MCF 10A (cell line): ENCODE measurements at regions of chr10 and their contacts with region 1.

Region 1: GRCh38 chr10:102009801-102010425 is 46.1 kb downstream of the ARMH3 start:
- DNase-seq: peak; percentile 87
- H3K4me3 Mint-ChIP-seq: no peak overlapping the region
- H3K27ac Mint-ChIP-seq: no peak overlapping the region
- H3K4me1 Mint-ChIP-seq: peaks cover 6% of the 10 kb centered on the region
- H3K27me3 Mint-ChIP-seq: no peaks in the 10 kb centered on the region
- CTCF ChIP-seq: peak; percentile 91

Region 2: DNA sequence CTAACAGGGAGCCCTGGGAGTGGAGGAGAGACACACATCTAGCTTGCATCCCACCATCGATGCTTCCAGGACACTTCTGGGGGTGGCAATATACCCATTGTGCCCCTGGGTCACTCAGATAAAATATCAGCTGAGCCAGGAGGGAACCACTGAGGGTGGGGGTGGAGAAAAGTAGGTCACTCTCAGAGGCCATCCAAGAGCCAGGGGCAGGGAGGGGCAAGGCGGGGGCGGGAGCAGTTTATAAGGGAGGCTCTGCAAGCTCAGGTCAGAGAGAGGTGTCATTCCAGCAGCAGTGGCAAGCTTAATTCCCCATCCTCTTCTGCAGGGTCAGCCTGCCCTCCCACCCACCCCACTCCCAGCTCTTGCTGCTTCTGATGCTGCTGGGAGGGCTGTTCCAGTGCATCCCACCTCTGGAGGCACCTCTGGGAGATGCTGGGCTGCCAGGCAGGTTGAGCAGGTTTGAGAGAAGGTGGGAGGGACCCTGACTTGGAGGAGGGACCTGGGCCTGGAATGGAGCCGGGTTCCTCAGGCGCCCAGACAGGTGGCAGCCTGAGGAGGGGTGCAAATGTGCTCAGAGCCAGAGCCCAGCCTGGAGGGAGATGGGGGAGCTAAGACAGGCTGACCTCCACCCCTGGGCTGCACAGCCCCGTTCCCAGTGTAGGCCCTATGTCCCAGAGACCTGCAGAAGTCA is 898.9 kb before region 1 on chr10:
- CTCF ChIA-PET with region 1: no interaction called
- POLR2A ChIA-PET with region 1: no interaction called
- intact Hi-C with region 1: no loop called
- DNase-seq: no peak
- H3K4me3 Mint-ChIP-seq: no peak overlapping the region
- H3K27ac Mint-ChIP-seq: no peak overlapping the region
- H3K4me1 Mint-ChIP-seq: no peaks in the 10 kb centered on the region
- H3K27me3 Mint-ChIP-seq: peaks cover 24% of the 10 kb centered on the region
- CTCF ChIP-seq: no peak

Region 3: GRCh38 chr10:101830322-101831168 is 179.4 kb before region 1 on chr10:
- CTCF ChIA-PET with region 1: interaction called, 53 read pairs
- POLR2A ChIA-PET with region 1: interaction called, 3 read pairs
- intact Hi-C with region 1: no loop called
- DNase-seq: peak; percentile 87
- H3K4me3 Mint-ChIP-seq: peak overlapping the region; percentile 80
- H3K27ac Mint-ChIP-seq: peak overlapping the region; percentile 75
- H3K4me1 Mint-ChIP-seq: peaks cover 25% of the 10 kb centered on the region
- H3K27me3 Mint-ChIP-seq: no peaks in the 10 kb centered on the region
- CTCF ChIP-seq: no peak

Region 4: GRCh38 chr10:101858723-101859500 is 151.0 kb before region 1 on chr10:
- CTCF ChIA-PET with region 1: interaction called, 13 read pairs
- POLR2A ChIA-PET with region 1: no interaction called
- intact Hi-C with region 1: no loop called
- DNase-seq: no peak
- H3K4me3 Mint-ChIP-seq: no peak overlapping the region
- H3K27ac Mint-ChIP-seq: no peak overlapping the region
- H3K4me1 Mint-ChIP-seq: no peaks in the 10 kb centered on the region
- H3K27me3 Mint-ChIP-seq: no peaks in the 10 kb centered on the region
- CTCF ChIP-seq: no peak

Region 5: GRCh38 chr10:101897633-101898032 is 112.3 kb before region 1 on chr10:
- CTCF ChIA-PET with region 1: interaction called, 11 read pairs
- POLR2A ChIA-PET with region 1: no interaction called
- intact Hi-C with region 1: no loop called
- DNase-seq: peak; percentile 35
- H3K4me3 Mint-ChIP-seq: no peak overlapping the region
- H3K27ac Mint-ChIP-seq: no peak overlapping the region
- H3K4me1 Mint-ChIP-seq: peaks cover 4% of the 10 kb centered on the region
- H3K27me3 Mint-ChIP-seq: no peaks in the 10 kb centered on the region
- CTCF ChIP-seq: no peak

Region 6: DNA sequence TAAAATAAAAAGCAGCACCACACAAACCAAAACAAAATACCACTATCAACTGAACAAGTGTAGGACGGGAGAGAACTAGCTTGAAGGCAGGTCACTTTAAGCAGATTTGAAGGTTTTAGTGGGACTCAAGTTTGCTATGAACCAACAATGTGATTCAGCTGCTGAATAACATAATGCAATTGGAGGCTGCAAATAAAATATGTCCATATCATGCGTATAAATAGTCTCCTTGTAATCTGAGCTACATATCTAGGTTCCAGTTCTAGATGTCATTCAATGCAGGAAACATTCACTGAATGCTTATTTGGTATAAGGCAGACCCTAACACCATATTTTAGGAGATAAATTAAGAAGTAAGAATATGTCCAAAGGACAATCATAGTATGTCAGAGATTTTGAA is 84.9 kb before region 1 on chr10:
- CTCF ChIA-PET with region 1: no interaction called
- POLR2A ChIA-PET with region 1: no interaction called
- intact Hi-C with region 1: no loop called
- DNase-seq: no peak
- H3K4me3 Mint-ChIP-seq: no peak overlapping the region
- H3K27ac Mint-ChIP-seq: no peak overlapping the region
- H3K4me1 Mint-ChIP-seq: no peaks in the 10 kb centered on the region
- H3K27me3 Mint-ChIP-seq: no peaks in the 10 kb centered on the region
- CTCF ChIP-seq: no peak

Region 7: GRCh38 chr10:102020938-102021337 is 11.0 kb after region 1 on chr10:
- CTCF ChIA-PET with region 1: interaction called, 30 read pairs
- POLR2A ChIA-PET with region 1: interaction called, 3 read pairs
- intact Hi-C with region 1: no loop called
- DNase-seq: no peak
- H3K4me3 Mint-ChIP-seq: no peak overlapping the region
- H3K27ac Mint-ChIP-seq: no peak overlapping the region
- H3K4me1 Mint-ChIP-seq: no peaks in the 10 kb centered on the region
- H3K27me3 Mint-ChIP-seq: no peaks in the 10 kb centered on the region
- CTCF ChIP-seq: no peak

Region 8: GRCh38 chr10:102072673-102073527 is 63.0 kb after region 1 on chr10:
- CTCF ChIA-PET with region 1: interaction called, 16 read pairs
- POLR2A ChIA-PET with region 1: interaction called, 3 read pairs
- intact Hi-C with region 1: loop called (anchors 2 kb)
- DNase-seq: peak; percentile 86
- H3K4me3 Mint-ChIP-seq: no peak overlapping the region
- H3K27ac Mint-ChIP-seq: peak overlapping the region; percentile 76
- H3K4me1 Mint-ChIP-seq: peaks cover 12% of the 10 kb centered on the region
- H3K27me3 Mint-ChIP-seq: no peaks in the 10 kb centered on the region
- CTCF ChIP-seq: peak; percentile 84

Region 9: GRCh38 chr10:102135956-102136526 is 126.1 kb after region 1 on chr10:
- CTCF ChIA-PET with region 1: no interaction called
- POLR2A ChIA-PET with region 1: no interaction called
- intact Hi-C with region 1: no loop called
- DNase-seq: no peak
- H3K4me3 Mint-ChIP-seq: no peak overlapping the region
- H3K27ac Mint-ChIP-seq: peak overlapping the region; percentile 96
- H3K4me1 Mint-ChIP-seq: peaks cover 29% of the 10 kb centered on the region
- H3K27me3 Mint-ChIP-seq: no peaks in the 10 kb centered on the region
- CTCF ChIP-seq: no peak